ENCODE measurements at regions of chr18 and their contacts with region 1.

Region 1: DNA sequence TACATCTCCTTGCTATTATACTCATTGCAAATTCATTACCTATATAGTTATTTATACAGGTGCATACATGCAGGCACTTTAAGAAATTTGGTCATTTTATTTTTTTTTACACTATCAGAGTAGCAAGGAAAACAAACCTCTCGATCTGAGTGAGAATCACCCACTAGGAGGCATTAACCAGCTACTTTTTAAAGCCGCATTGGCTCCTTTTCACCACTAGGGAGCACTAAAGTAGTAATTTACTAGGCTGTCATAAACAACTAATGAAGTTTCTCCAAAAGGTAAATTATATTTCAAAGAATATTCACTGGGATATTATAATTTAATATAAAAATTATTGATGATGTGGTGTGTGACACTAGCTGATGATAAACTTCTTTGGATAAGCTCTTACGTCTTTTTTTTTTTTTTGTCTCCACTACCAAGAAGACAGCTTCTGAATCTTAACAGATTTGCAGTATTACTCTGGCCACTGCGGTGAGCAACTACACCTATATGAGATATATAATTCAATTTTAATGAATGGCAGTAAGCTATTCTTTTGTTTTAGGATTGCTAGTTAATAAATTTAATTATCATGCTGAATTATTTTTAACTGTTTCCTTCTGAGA is 101.9 kb downstream of the NOL4 start:
- DNase-seq: peak; percentile 37
- CTCF ChIP-seq: peak; percentile 85

Region 2: DNA sequence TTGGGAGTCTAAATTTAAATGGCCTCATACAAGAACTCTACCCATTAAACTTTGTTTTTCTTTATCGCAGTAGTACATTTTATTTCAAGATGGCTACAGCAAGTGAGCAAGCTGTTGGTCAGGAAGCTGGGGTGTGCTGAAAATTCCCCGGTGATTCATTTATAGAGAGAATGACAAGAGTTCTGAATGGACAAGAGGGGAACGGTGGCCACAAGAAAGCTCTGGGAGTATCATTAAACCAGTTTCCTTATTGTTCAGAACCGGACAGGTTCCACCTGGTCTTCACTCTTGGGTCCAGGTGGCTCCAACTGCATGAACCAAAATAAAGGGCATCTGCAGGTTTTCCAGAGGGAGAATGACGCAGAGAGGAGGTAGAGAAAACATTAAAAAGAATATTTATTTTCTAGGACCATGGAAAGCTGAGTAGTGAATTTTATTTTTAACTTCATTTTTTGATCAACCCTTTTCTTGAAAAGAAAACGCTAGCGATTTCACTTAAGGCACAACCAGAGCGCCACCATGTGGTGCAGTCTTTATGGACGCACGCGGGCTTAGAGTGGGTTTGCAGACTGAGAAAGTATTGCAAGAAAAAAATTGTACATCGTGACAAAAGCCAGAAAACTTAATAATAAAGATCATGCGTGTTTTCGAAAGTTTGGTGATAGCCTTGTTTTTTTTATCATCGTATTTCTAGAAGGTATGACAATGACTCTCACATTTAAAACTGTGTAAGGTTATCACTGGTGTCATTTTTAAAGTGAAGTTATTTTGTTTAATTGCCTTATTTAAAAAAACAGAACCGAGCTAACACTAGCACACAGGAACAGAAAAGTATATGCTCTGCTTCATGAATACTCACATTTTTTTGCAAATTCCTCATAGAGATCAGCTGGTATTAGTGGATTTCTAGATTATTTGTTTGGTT is 199.8 kb after region 1 on chr18:
- CTCF ChIA-PET with region 1: interaction called, 49 read pairs
- POLR2A ChIA-PET with region 1: interaction called, 4 read pairs
- DNase-seq: peak; percentile 17
- CTCF ChIP-seq: peak; percentile 76

Region 3: DNA sequence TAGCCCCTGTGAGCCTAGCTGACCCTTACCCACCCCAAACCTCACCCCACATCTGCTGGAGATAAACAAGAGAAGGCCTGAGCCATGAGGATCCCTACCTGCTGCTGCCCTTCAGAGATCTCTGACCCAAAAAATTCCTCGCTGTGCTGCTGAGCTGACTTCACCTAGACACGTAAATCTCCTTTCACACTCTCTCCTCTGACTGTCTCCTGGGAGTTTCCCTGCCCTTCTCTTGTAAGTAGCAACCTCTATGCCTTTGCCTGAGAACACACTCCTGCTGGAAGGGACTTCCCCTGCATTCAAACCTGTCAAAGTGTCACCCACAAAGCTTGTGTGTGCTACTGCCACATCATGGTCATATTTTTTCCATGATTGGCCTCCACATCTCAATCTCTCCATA is 236.1 kb after region 1 on chr18:
- CTCF ChIA-PET with region 1: interaction called, 22 read pairs
- POLR2A ChIA-PET with region 1: no interaction called
- DNase-seq: peak; percentile 45
- CTCF ChIP-seq: no peak

Region 4: GRCh38 chr18:34787931-34788532 is 665.2 kb after region 1 on chr18:
- CTCF ChIA-PET with region 1: interaction called, 22 read pairs
- POLR2A ChIA-PET with region 1: no interaction called
- DNase-seq: peak; percentile 45
- CTCF ChIP-seq: peak; percentile 80

Measured in GM10248 (cell line).